ENCODE measurements at regions of chr6 and their contacts with region 1.

Region 1: DNA sequence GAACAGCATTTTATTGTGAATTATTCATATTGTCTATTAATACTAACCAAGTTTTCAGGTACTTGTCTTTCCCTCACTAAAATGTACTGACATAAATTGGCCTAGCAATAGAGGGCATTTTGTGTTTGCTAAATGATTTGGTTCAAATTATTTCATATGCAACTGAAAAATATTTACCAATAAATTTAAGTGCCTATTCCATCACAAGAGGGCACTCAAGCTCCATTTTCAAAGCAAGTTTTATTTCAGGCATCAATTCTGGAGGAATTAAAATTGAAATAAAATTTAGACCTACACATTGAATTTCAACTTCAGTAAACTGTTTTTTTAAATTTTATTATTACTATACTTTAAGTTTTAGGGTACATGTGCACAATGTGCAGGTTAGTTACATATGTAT is 114.3 kb upstream of the SYNCRIP start:
- DNase-seq: no peak
- ATAC-seq: no peak
- H3K4me3 ChIP-seq: no peak overlapping the region
- H3K4me3 Mint-ChIP-seq: no peak overlapping the region
- H3K27ac ChIP-seq: no peak overlapping the region
- H3K27ac Mint-ChIP-seq: no peak overlapping the region
- H3K4me1 ChIP-seq: no peaks in the 10 kb centered on the region
- H3K4me1 Mint-ChIP-seq: no peaks in the 10 kb centered on the region
- H3K27me3 ChIP-seq: no peaks in the 10 kb centered on the region
- H3K27me3 Mint-ChIP-seq: peaks cover 0 to 10% (median 9%) of the 10 kb centered on the region in 5 donors

Region 2: GRCh38 chr6:85642774-85643536 is 114.0 kb before region 1 on chr6 and contains the start of gene SYNCRIP:
- CTCF ChIA-PET with region 1: no interaction called
- POLR2A ChIA-PET with region 1: no interaction called
- intact Hi-C with region 1: no loop called
- DNase-seq: peak; percentile 96 to 99 (median 99)
- ATAC-seq: peak; percentile 91
- H3K4me3 ChIP-seq: peak within 1 kb of the TSS; percentile 99
- H3K4me3 Mint-ChIP-seq: peak within 1 kb of the TSS; percentile 90 to 99 (median 96)
- H3K27ac ChIP-seq: peak within 1 kb of the TSS; percentile 99
- H3K27ac Mint-ChIP-seq: peak within 1 kb of the TSS; percentile 97 to 100 (median 99)
- H3K4me1 ChIP-seq: peaks cover 29 to 31% of the 10 kb centered on the region in 2 donors
- H3K4me1 Mint-ChIP-seq: peaks cover 40 to 52% (median 49%) of the 10 kb centered on the region in 7 donors
- H3K27me3 ChIP-seq: no peaks in the 10 kb centered on the region
- H3K27me3 Mint-ChIP-seq: peaks cover 0 to under 1% (median 0%) of the 10 kb centered on the region in 5 donors
- total RNA-seq, gene SYNCRIP: 69.8 to 131 (median 82.2) TPM

Region 3: DNA sequence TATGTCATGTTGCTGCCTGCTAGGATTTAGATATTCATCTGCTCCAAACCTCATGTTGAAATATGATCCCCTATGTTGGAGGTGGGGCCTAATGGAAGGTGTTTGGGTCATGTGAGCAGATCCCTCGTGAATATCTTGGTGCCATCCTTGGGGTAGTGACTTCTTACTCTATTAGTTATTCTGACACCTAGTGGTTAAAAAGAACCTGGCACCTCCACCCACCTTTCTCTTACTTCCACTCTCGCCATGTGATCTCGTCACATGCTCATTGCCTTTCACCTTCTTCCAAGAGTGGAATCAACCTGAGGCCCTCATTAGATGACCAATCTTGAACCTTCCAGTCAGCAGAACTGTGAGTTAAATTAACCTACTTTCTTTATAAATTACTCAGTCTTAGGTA is 435.1 kb after region 1 on chr6:
- CTCF ChIA-PET with region 1: no interaction called
- POLR2A ChIA-PET with region 1: no interaction called
- intact Hi-C with region 1: loop called in 1 of 2 experiments (anchors 5 kb)
- DNase-seq: no peak
- ATAC-seq: no peak
- H3K4me3 ChIP-seq: no peak overlapping the region
- H3K4me3 Mint-ChIP-seq: no peak overlapping the region
- H3K27ac ChIP-seq: no peak overlapping the region
- H3K27ac Mint-ChIP-seq: no peak overlapping the region
- H3K4me1 ChIP-seq: no peaks in the 10 kb centered on the region
- H3K4me1 Mint-ChIP-seq: peaks cover 0 to 2% (median 0%) of the 10 kb centered on the region in 7 donors
- H3K27me3 ChIP-seq: no peaks in the 10 kb centered on the region
- H3K27me3 Mint-ChIP-seq: no peaks in the 10 kb centered on the region

Measured in naive thymus-derived CD4-positive, alpha-beta T cell (primary cell).